ENCODE measurements at regions of chr20 and their contacts with region 1.

Region 1: DNA sequence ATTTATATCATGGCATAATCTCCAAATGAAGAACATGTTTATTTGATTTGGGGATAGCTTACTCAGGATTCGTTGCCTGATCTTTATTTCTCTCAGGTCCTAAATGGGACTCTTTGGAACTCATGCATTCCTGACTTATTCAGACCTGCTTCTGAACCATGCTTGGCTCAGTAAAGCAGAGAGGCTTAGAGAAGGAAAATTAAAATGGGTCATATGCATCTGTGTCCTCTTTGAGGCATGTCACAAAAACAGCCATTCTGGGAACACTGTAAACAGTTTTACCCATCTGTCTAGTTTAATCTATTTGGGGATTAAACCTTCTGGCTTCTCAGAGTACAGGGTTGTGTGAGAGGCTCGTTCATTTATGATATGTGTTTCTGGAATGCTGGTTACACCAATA is 1017.3 kb downstream of the KIF16B start:
- DNase-seq: no peak
- H3K4me3 ChIP-seq: no peak overlapping the region
- H3K27ac ChIP-seq: peak overlapping the region in 2 of 59 donors; percentile 7 to 33
- H3K27me3 ChIP-seq: no peaks in the 10 kb centered on the region
- CTCF ChIP-seq: no peak

Region 2: DNA sequence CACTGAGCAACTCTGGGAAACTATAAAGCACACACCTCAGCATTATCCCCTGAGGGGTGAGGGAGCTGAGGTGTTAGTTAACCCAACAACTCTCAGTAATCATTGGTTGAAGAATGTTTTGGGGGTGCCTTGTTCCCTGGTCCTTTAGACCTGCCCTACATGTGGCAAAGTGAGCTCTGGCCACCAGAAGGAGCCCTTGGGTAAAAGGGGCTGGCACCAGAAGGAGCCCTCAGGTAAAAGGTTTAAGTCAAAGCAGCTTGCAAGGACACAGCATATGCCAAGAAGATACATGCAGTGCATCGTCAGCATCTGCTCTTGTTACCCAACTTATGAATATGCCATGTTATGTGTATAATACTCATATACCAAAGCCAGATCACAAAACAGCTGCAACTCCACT is 64.3 kb before region 1 on chr20:
- intact Hi-C with region 1: no loop called
- DNase-seq: no peak
- H3K4me3 ChIP-seq: no peak overlapping the region
- H3K27ac ChIP-seq: no peak overlapping the region
- H3K27me3 ChIP-seq: no peaks in the 10 kb centered on the region
- CTCF ChIP-seq: peak in 6 of 56 donors; percentile 10 to 19 (median 12)

Region 3: GRCh38 chr20:15789079-15789478 is 233.2 kb after region 1 on chr20:
- intact Hi-C with region 1: loop called in 1 of 2 experiments (anchors 10 kb)
- DNase-seq: no peak
- H3K4me3 ChIP-seq: peak overlapping the region in 34 of 59 donors; percentile 1 to 49 (median 20)
- H3K27ac ChIP-seq: peak overlapping the region; percentile 28 to 94 (median 82)
- H3K27me3 ChIP-seq: no peaks in the 10 kb centered on the region
- CTCF ChIP-seq: no peak